MCF 10A (cell line): ENCODE measurements at regions of chr18 and their contacts with region 1.

Region 1: DNA sequence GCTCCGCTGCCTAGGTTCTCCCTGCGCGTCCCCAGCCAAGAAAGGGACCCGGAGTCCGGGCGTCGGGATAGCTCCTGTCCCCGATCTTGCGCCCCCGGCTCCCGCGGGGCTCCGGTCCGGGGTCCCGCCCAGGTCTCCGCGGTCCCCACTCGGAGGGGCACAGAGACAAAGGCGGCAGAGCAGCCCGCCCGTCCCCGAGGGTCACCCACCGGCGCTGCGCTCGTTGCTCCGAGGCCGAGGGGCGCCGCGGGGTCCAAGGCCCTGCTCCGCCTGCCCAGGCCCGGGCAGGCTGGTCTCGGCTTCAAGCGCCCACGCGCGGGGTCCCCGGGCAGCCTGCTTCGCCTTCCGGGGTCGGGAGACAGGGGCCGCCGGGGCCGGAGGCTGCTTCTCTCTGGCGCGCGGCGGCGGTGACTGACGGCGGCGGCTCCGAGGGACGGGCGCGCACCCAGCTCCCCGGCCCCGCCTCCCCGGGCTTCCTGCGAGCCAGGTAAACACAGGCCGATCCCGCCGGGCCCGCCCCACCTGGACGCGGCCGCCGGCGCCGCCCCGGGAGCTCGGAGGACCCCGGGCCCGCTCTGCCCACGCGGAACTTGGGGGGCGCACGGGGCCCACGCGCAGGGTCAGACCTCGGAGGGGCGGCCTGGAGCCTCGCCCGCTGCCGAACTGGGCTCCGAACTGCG is at the start of gene MBP:
- DNase-seq: peak; percentile 73
- H3K4me3 Mint-ChIP-seq: peak within 1 kb of the TSS; percentile 82
- H3K27ac Mint-ChIP-seq: no peak within 1 kb of the TSS
- H3K4me1 Mint-ChIP-seq: peaks cover 16% of the 10 kb centered on the region
- H3K27me3 Mint-ChIP-seq: no peaks in the 10 kb centered on the region
- CTCF ChIP-seq: no peak
- total RNA-seq, gene MBP: 31.6 and 31.7 TPM in 2 replicates

Region 2: GRCh38 chr18:77067291-77068061 is 65.0 kb before region 1 on chr18:
- CTCF ChIA-PET with region 1: interaction called, 8 read pairs
- POLR2A ChIA-PET with region 1: interaction called, 33 read pairs
- intact Hi-C with region 1: loop called (anchors 1 kb)
- DNase-seq: peak; percentile 88
- H3K4me3 Mint-ChIP-seq: peak overlapping the region; percentile 40
- H3K27ac Mint-ChIP-seq: peak overlapping the region; percentile 88
- H3K4me1 Mint-ChIP-seq: peaks cover 50% of the 10 kb centered on the region
- H3K27me3 Mint-ChIP-seq: no peaks in the 10 kb centered on the region
- CTCF ChIP-seq: peak; percentile 17

Region 3: DNA sequence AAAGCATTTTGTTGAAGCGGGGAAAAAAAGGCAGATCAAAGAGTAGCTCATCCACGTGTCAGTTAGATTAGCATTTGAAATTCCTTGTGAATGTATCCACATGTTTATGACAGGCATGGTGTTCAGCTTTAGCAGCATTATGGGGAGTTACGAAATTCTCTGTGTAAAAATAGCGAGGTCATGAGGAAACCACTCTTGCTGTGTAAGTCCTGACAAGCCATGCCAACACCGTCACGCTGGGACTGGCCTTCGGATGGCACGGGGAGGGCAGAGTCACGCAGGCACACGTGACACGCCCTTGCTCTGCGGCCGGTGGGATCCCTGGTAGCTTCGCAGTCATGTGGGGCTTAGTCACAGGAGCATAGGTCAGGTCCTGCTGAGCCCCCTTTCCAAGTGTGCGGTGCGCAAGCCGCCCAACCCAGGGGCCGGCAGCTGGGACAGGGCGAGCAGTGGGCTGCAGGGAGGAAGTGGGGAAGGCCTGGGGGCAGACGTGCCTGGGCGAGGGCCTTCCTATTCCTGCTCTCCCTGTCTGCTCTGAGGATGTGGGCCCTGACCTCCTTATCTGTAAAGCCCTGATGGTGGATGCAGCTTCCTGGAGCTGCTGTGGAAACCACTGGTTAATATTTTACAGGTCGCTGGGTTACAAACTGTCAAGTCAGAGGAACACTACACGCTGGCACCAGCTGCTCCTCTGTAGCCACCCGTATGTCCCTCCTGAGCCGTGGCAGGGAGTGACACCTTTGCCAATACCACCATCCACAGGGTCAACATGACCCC is 17.9 kb before region 1 on chr18:
- CTCF ChIA-PET with region 1: interaction called, 10 read pairs
- POLR2A ChIA-PET with region 1: interaction called, 68 read pairs
- intact Hi-C with region 1: loop called (anchors 2 kb)
- DNase-seq: peak; percentile 98
- H3K4me3 Mint-ChIP-seq: peak overlapping the region; percentile 57
- H3K27ac Mint-ChIP-seq: peak overlapping the region; percentile 85
- H3K4me1 Mint-ChIP-seq: peaks cover 44% of the 10 kb centered on the region
- H3K27me3 Mint-ChIP-seq: no peaks in the 10 kb centered on the region
- CTCF ChIP-seq: no peak

Region 4: GRCh38 chr18:78390348-78390929 is 1257.9 kb after region 1 on chr18:
- CTCF ChIA-PET with region 1: no interaction called
- POLR2A ChIA-PET with region 1: no interaction called
- intact Hi-C with region 1: no loop called
- DNase-seq: no peak
- H3K4me3 Mint-ChIP-seq: no peak overlapping the region
- H3K27ac Mint-ChIP-seq: no peak overlapping the region
- H3K4me1 Mint-ChIP-seq: no peaks in the 10 kb centered on the region
- H3K27me3 Mint-ChIP-seq: no peaks in the 10 kb centered on the region
- CTCF ChIP-seq: no peak